Activated CD4-positive, alpha-beta T cell treated with anti-CD3 and anti-CD28 coated beads, Interleukin-2, amount 10 ng/mL, durations not matched to agents 24 days and 14 days (primary cell): ENCODE measurements at regions of chr3 and their contacts with region 1.

Region 1: GRCh38 chr3:122576174-122576940 is 1.1 kb upstream of the PARP15 start:
- DNase-seq: peak; percentile 67
- H3K4me3 Mint-ChIP-seq: peak overlapping the region; percentile 1
- H3K27ac Mint-ChIP-seq: peak overlapping the region; percentile 70
- H3K4me1 Mint-ChIP-seq: peaks cover 58% of the 10 kb centered on the region
- H3K27me3 Mint-ChIP-seq: no peaks in the 10 kb centered on the region

Region 2: DNA sequence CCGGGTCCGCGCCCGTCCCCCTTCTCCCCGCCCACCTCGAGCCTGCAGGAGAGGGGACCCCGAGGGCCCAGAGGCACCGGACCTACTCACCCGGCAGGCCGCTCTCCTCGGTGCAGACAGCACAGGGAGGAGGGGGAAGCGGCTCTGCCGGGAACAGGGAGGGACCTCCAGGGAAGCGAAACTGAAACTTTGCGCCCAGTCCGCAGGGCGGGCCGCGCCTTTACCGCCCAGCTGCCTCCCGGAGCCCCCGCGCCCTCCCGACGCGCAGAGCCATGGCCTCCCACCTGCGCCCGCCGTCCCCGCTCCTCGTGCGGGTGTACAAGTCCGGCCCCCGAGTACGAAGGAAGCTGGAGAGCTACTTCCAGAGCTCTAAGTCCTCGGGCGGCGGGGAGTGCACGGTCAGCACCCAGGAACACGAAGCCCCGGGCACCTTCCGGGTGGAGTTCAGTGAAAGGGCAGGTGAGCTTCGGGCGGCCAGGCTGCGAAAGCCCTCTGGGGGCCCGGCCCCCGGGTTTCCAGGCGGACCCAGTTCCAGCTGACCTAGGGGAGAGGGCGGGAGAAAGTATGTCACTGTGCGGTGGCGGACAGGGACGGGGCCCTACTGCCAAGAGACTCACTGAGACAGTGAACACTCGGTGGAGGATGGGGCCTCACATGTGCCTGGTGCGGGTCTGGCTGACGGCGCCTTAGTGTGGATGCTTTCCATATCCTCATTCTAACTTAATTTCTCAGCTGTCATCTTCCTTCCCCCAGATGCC is 12.0 kb before region 1 on chr3 and contains the starts of genes DTX3L and PARP9:
- intact Hi-C with region 1: loop called (anchors 1 kb)
- DNase-seq: peak; percentile 97
- H3K4me3 Mint-ChIP-seq: peak within 1 kb of the TSS; percentile 95
- H3K27ac Mint-ChIP-seq: peak within 1 kb of the TSS; percentile 98
- H3K4me1 Mint-ChIP-seq: peaks cover 71% of the 10 kb centered on the region
- H3K27me3 Mint-ChIP-seq: no peaks in the 10 kb centered on the region
- total RNA-seq, gene DTX3L: 39.8 and 43.7 TPM in 2 replicates
- total RNA-seq, gene PARP9: 45.7 and 47.9 TPM in 2 replicates

Region 3: GRCh38 chr3:122642935-122643334 is 66.6 kb after region 1 on chr3:
- intact Hi-C with region 1: loop called (anchors 2 kb)
- DNase-seq: peak; percentile 59
- H3K4me3 Mint-ChIP-seq: peak overlapping the region; percentile 68
- H3K27ac Mint-ChIP-seq: peak overlapping the region; percentile 73
- H3K4me1 Mint-ChIP-seq: peaks cover 36% of the 10 kb centered on the region
- H3K27me3 Mint-ChIP-seq: no peaks in the 10 kb centered on the region

Region 4: DNA sequence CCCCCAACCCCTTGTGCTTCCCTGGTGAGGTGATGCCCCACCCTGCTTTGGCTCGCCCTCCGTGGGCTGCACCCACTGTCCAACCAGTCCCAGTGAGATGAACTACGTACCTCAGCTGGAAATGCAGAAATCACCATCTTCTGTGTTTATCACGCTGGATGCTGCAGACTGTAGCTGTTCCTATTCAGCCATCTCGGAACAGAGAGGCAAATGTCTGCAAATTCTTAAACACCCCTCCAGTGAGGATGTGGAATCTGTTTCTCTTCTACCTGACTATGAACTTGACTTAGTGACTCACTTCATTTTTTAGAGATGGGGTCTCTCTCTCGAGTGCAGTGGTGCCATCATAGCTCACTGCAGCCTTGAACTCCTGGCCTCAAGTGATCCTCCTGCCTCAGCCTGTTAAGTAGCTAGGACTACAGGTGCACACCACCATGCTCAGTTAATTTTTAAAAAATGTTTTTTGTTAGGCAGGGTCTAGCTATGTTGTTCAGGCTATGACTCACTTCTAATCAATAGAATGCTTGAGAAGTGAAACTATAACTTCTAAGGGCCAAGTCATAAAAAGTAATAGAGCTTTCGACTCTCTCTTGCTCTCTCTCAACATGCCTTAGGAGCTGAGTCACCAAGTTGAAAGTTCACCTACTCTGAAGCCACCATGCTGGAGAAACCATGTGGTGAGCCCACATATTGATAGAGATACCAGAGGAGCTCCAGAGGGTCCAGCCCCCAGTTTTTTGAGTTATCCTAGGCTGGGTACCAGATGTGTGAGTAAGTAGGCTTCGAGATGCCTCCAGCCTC is 92.8 kb after region 1 on chr3:
- intact Hi-C with region 1: loop called (anchors 1 kb)
- DNase-seq: peak; percentile 78
- H3K4me3 Mint-ChIP-seq: peak overlapping the region; percentile 49
- H3K27ac Mint-ChIP-seq: peak overlapping the region; percentile 85
- H3K4me1 Mint-ChIP-seq: peaks cover 17% of the 10 kb centered on the region
- H3K27me3 Mint-ChIP-seq: no peaks in the 10 kb centered on the region